A673 (cell line): ENCODE measurements at regions of chrX and their contacts with region 1.

Region 1: GRCh38 chrX:134642386-134642785 is 15.9 kb downstream of the PLAC1 start:
- DNase-seq: no peak
- H3K4me3 ChIP-seq: no peak overlapping the region
- H3K27ac ChIP-seq: no peak overlapping the region
- H3K4me1 ChIP-seq: no peaks in the 10 kb centered on the region
- H3K27me3 ChIP-seq: no peaks in the 10 kb centered on the region
- CTCF ChIP-seq: no peak

Region 2: GRCh38 chrX:134807039-134807731 is 164.8 kb after region 1 on chrX:
- CTCF ChIA-PET with region 1: no interaction called
- POLR2A ChIA-PET with region 1: interaction called, 13 read pairs
- intact Hi-C with region 1: no loop called
- DNase-seq: peak; percentile 94
- H3K4me3 ChIP-seq: peak overlapping the region; percentile 63
- H3K27ac ChIP-seq: peak overlapping the region; percentile 55
- H3K4me1 ChIP-seq: no peaks in the 10 kb centered on the region
- H3K27me3 ChIP-seq: no peaks in the 10 kb centered on the region
- CTCF ChIP-seq: no peak